ENCODE measurements at regions of chr1 and their contacts with region 1.

Region 1: DNA sequence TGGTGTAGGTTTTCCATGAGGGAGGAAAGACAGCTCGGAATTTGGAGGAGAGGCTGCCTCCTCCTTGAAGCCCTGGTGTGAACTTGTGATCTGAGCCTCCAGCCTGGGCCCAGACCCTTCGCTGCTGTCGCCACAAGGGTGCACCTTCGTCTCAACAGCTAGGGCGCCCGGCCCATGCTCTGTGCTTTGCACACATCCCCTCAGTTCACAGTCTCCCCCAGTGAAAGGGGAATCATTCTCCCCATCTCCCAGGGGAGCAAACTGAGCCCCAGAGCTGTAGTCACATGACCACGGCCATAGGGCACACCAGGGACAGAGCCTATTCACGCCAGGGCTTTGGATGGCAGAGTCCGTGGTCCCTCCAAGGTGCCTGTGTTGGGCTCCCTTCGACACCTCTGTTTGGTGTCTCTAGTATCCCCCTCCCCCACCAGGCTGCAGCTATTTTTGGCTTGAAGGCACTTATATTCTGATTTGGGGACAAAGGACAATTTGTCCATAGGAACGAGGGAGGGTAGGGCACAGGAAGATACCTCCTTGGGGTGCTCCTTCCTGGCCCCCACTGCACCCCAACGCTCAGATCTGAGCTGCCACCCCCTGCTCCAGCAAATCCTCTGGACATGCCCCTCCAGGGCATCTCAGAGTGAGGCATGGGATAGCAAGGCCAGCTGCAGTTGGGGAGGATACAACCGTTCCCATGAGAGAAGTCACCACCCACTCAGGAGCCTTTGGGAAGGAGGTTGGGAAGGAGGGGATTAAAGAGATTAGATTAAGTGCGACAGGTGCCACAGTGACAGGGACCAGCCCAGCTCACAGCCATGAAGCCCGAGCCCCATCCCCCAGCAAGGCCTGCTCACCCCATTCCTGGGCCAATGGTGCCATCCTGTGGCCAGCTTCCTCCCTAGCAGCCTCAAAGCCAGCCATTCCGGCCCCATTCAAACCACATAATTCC is 15.7 kb downstream of the MATN1 start:
- DNase-seq: peak; percentile 75
- H3K4me3 Mint-ChIP-seq: no peak overlapping the region
- H3K27ac Mint-ChIP-seq: no peak overlapping the region
- H3K4me1 Mint-ChIP-seq: peaks cover 5% of the 10 kb centered on the region
- H3K27me3 Mint-ChIP-seq: peaks cover 11% of the 10 kb centered on the region
- CTCF ChIP-seq: peak; percentile 97

Region 2: GRCh38 chr1:28886731-28887418 is 1820.8 kb before region 1 on chr1:
- CTCF ChIA-PET with region 1: interaction called, 3 read pairs
- POLR2A ChIA-PET with region 1: no interaction called
- intact Hi-C with region 1: loop called (anchors 10 kb)
- DNase-seq: peak; percentile 90
- H3K4me3 Mint-ChIP-seq: peak overlapping the region; percentile 95
- H3K27ac Mint-ChIP-seq: peak overlapping the region; percentile 89
- H3K4me1 Mint-ChIP-seq: peaks cover 40% of the 10 kb centered on the region
- H3K27me3 Mint-ChIP-seq: no peaks in the 10 kb centered on the region
- CTCF ChIP-seq: no peak

Region 3: GRCh38 chr1:29341936-29342335 is 1365.8 kb before region 1 on chr1:
- CTCF ChIA-PET with region 1: interaction called, 3 read pairs
- POLR2A ChIA-PET with region 1: no interaction called
- intact Hi-C with region 1: loop called (anchors 5 kb)
- DNase-seq: peak; percentile 6
- H3K4me3 Mint-ChIP-seq: no peak overlapping the region
- H3K27ac Mint-ChIP-seq: no peak overlapping the region
- H3K4me1 Mint-ChIP-seq: no peaks in the 10 kb centered on the region
- H3K27me3 Mint-ChIP-seq: peaks cover 42% of the 10 kb centered on the region
- CTCF ChIP-seq: no peak

Region 4: GRCh38 chr1:29912425-29912824 is 795.3 kb before region 1 on chr1:
- CTCF ChIA-PET with region 1: interaction called, 4 read pairs
- POLR2A ChIA-PET with region 1: no interaction called
- intact Hi-C with region 1: loop called (anchors 2 kb)
- DNase-seq: peak; percentile 53
- H3K4me3 Mint-ChIP-seq: no peak overlapping the region
- H3K27ac Mint-ChIP-seq: no peak overlapping the region
- H3K4me1 Mint-ChIP-seq: no peaks in the 10 kb centered on the region
- H3K27me3 Mint-ChIP-seq: peaks cover 38% of the 10 kb centered on the region
- CTCF ChIP-seq: peak; percentile 36

Region 5: GRCh38 chr1:30111431-30111830 is 596.3 kb before region 1 on chr1:
- CTCF ChIA-PET with region 1: interaction called, 4 read pairs
- POLR2A ChIA-PET with region 1: no interaction called
- intact Hi-C with region 1: loop called (anchors 2 kb)
- DNase-seq: peak; percentile 57
- H3K4me3 Mint-ChIP-seq: no peak overlapping the region
- H3K27ac Mint-ChIP-seq: no peak overlapping the region
- H3K4me1 Mint-ChIP-seq: peaks cover 6% of the 10 kb centered on the region
- H3K27me3 Mint-ChIP-seq: peaks cover 72% of the 10 kb centered on the region
- CTCF ChIP-seq: peak; percentile 67

Region 6: GRCh38 chr1:30379684-30380624 is 327.7 kb before region 1 on chr1:
- CTCF ChIA-PET with region 1: interaction called, 20 read pairs
- POLR2A ChIA-PET with region 1: no interaction called
- intact Hi-C with region 1: loop called (anchors 2 kb)
- DNase-seq: peak; percentile 78
- H3K4me3 Mint-ChIP-seq: no peak overlapping the region
- H3K27ac Mint-ChIP-seq: no peak overlapping the region
- H3K4me1 Mint-ChIP-seq: peaks cover 12% of the 10 kb centered on the region
- H3K27me3 Mint-ChIP-seq: peaks cover 46% of the 10 kb centered on the region
- CTCF ChIP-seq: peak; percentile 69

Measured in MCF 10A (cell line).